Mammary epithelial cell (primary cell): ENCODE measurements at regions of chr15 and their contacts with region 1.

Region 1: DNA sequence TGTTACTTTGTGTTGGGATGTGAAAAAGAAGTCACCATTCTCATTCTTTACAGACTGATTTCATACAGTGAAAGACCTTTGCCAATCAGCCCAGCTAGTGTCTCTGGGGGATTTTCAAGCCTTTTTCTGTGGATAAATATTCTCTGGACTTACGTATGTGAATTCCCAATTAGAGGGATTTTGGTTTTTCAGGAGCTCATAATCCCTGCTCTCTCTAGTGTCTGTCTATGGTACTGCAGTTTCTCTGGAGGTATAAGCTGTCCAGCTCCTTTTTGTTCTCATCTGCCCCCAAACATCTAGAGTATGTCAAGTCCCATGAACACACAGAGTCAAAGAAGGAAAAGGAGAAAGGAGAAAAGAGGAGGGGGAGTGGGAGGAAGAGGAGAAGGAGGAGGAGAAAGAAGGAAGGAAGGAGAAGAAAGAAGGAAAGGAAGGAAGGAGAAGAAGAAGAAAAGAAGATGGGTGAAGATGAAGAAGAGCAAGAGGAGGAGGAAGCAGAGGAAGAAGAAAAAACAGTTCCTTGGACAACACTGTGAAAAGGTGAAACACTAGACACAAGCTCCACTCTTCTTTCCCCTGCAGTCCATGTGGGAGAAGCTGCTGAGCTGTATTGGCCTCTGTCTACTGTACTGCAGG is 218.6 kb downstream of the GREM1 start:
- DNase-seq: peak; percentile 11
- H3K4me3 ChIP-seq: no peak overlapping the region
- H3K27ac ChIP-seq: no peak overlapping the region
- H3K4me1 ChIP-seq: no peaks in the 10 kb centered on the region
- H3K27me3 ChIP-seq: no peaks in the 10 kb centered on the region
- CTCF ChIP-seq: peak; percentile 73 to 74

Region 2: GRCh38 chr15:32994810-32995424 is 58.5 kb after region 1 on chr15:
- CTCF ChIA-PET with region 1: no interaction called
- dilution Hi-C with region 1: no loop called
- in situ Hi-C with region 1: no loop called
- intact Hi-C with region 1: loop called (anchors 10 kb)
- DNase-seq: no peak
- H3K4me3 ChIP-seq: no peak overlapping the region
- H3K27ac ChIP-seq: no peak overlapping the region
- H3K4me1 ChIP-seq: no peaks in the 10 kb centered on the region
- H3K27me3 ChIP-seq: no peaks in the 10 kb centered on the region
- CTCF ChIP-seq: peak; percentile 56 to 67